B cell (primary cell): ENCODE measurements at regions of chr9 and their contacts with region 1.

Region 1: GRCh38 chr9:71768388-71769174 is at the start of gene CEMIP2:
- DNase-seq: peak; percentile 91
- ATAC-seq: peak; percentile 80
- H3K4me3 ChIP-seq: peak within 1 kb of the TSS; percentile 73 to 95 (median 94)
- H3K4me3 Mint-ChIP-seq: peak within 1 kb of the TSS; percentile 92
- H3K27ac ChIP-seq: peak within 1 kb of the TSS; percentile 87 to 89
- H3K27ac Mint-ChIP-seq: peak within 1 kb of the TSS; percentile 97
- H3K4me1 ChIP-seq: peaks cover 47 to 56% of the 10 kb centered on the region in 2 donors
- H3K4me1 Mint-ChIP-seq: peaks cover 52% of the 10 kb centered on the region
- H3K27me3 ChIP-seq: no peaks in the 10 kb centered on the region
- H3K27me3 Mint-ChIP-seq: no peaks in the 10 kb centered on the region
- CTCF ChIP-seq: no peak
- total RNA-seq, gene CEMIP2: 86.9 and 90.6 TPM in 2 replicates

Region 2: DNA sequence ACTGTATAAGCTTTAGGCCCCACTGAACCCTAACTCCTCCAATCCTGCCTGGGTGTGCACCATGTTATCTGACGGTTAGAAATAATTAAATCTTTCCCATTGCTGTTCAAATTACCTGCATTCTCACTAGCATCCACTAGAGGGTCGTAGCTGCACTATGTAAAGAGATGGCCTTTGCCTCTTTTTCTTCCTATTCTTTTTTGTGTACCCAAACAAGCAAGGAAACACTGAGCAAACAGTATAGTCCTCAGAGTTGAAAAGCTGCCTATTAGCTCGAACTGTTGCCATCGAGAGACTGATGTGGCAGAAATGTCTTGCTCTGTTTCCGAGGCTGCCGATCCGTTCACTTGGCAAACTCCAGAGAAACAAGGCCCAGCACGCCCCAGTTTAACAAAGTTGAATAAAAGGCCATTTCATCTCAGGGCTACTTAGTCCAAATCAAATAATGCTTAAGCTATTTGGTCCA is 483.4 kb before region 1 on chr9:
- CTCF ChIA-PET with region 1: no interaction called
- POLR2A ChIA-PET with region 1: no interaction called
- intact Hi-C with region 1: loop called (anchors 5 kb)
- DNase-seq: peak; percentile 54
- ATAC-seq: peak; percentile 61
- H3K4me3 ChIP-seq: no peak overlapping the region
- H3K4me3 Mint-ChIP-seq: no peak overlapping the region
- H3K27ac ChIP-seq: no peak overlapping the region
- H3K27ac Mint-ChIP-seq: no peak overlapping the region
- H3K4me1 ChIP-seq: no peaks in the 10 kb centered on the region
- H3K4me1 Mint-ChIP-seq: no peaks in the 10 kb centered on the region
- H3K27me3 ChIP-seq: no peaks in the 10 kb centered on the region
- H3K27me3 Mint-ChIP-seq: no peaks in the 10 kb centered on the region
- CTCF ChIP-seq: peak; percentile 93

Region 3: GRCh38 chr9:71487061-71487460 is 281.5 kb before region 1 on chr9:
- CTCF ChIA-PET with region 1: no interaction called
- POLR2A ChIA-PET with region 1: no interaction called
- intact Hi-C with region 1: no loop called
- DNase-seq: no peak
- ATAC-seq: no peak
- H3K4me3 ChIP-seq: no peak overlapping the region
- H3K4me3 Mint-ChIP-seq: no peak overlapping the region
- H3K27ac ChIP-seq: no peak overlapping the region
- H3K27ac Mint-ChIP-seq: no peak overlapping the region
- H3K4me1 ChIP-seq: no peaks in the 10 kb centered on the region
- H3K4me1 Mint-ChIP-seq: no peaks in the 10 kb centered on the region
- H3K27me3 ChIP-seq: peaks cover 0 to 13% (median 5%) of the 10 kb centered on the region in 4 experiments
- H3K27me3 Mint-ChIP-seq: peaks cover 33% of the 10 kb centered on the region
- CTCF ChIP-seq: no peak

Region 4: GRCh38 chr9:71716138-71716909 is 52.3 kb before region 1 on chr9:
- CTCF ChIA-PET with region 1: interaction called, 7 read pairs
- POLR2A ChIA-PET with region 1: no interaction called
- intact Hi-C with region 1: loop called (anchors 5 kb)
- DNase-seq: no peak
- ATAC-seq: no peak
- H3K4me3 ChIP-seq: no peak overlapping the region
- H3K4me3 Mint-ChIP-seq: no peak overlapping the region
- H3K27ac ChIP-seq: no peak overlapping the region
- H3K27ac Mint-ChIP-seq: no peak overlapping the region
- H3K4me1 ChIP-seq: no peaks in the 10 kb centered on the region
- H3K4me1 Mint-ChIP-seq: no peaks in the 10 kb centered on the region
- H3K27me3 ChIP-seq: no peaks in the 10 kb centered on the region
- H3K27me3 Mint-ChIP-seq: no peaks in the 10 kb centered on the region
- CTCF ChIP-seq: peak; percentile 82

Region 5: GRCh38 chr9:71748280-71748743 is 20.3 kb before region 1 on chr9:
- CTCF ChIA-PET with region 1: interaction called, 12 read pairs
- POLR2A ChIA-PET with region 1: no interaction called
- intact Hi-C with region 1: no loop called
- DNase-seq: no peak
- ATAC-seq: no peak
- H3K4me3 ChIP-seq: no peak overlapping the region
- H3K4me3 Mint-ChIP-seq: no peak overlapping the region
- H3K27ac ChIP-seq: no peak overlapping the region
- H3K27ac Mint-ChIP-seq: peak overlapping the region; percentile 5
- H3K4me1 ChIP-seq: peaks cover 10 to 14% of the 10 kb centered on the region in 2 donors
- H3K4me1 Mint-ChIP-seq: peaks cover 38% of the 10 kb centered on the region
- H3K27me3 ChIP-seq: no peaks in the 10 kb centered on the region
- H3K27me3 Mint-ChIP-seq: no peaks in the 10 kb centered on the region
- CTCF ChIP-seq: no peak

Region 6: DNA sequence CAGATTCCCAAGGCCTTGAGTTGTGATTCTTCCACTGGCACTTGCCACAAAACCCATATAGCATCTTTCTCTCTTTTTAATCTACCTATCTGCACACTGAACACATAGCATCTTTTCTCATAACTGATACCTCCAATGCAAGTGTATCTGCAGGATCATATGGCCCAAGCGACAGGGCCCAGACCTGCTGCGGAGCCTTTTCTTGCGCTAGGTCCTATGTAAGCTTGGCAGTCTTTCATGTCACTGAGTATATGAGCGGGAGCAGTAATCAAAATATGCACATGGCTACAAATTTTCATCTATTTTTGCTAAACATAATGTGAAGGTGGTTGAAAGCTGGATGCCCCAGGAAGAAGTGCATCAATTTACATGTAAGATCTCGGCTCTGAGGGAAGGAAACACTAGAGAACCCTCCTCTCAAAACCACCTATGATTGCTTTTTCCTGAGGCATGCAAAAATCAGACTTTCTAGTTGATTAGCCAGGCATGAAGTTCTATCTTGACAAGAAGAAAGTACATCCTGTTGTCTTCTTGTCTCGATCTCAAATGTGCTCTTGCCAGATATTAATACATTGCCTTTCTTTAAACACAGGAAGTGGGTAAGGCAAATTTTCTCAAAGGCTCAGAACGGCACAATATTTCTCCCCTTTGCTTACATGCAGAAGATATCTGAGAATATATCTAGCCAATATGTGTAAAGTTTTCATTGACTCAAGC is 26.7 kb after region 1 on chr9:
- CTCF ChIA-PET with region 1: interaction called, 7 read pairs
- POLR2A ChIA-PET with region 1: interaction called, 18 read pairs
- intact Hi-C with region 1: loop called (anchors 1 kb)
- DNase-seq: peak; percentile 87
- ATAC-seq: peak; percentile 87
- H3K4me3 ChIP-seq: peak overlapping the region in 1 of 5 experiments; percentile 40
- H3K4me3 Mint-ChIP-seq: peak overlapping the region; percentile 92
- H3K27ac ChIP-seq: peak overlapping the region; percentile 84 to 92
- H3K27ac Mint-ChIP-seq: peak overlapping the region; percentile 93
- H3K4me1 ChIP-seq: peaks cover 77 to 80% of the 10 kb centered on the region in 2 donors
- H3K4me1 Mint-ChIP-seq: peaks cover 70% of the 10 kb centered on the region
- H3K27me3 ChIP-seq: no peaks in the 10 kb centered on the region
- H3K27me3 Mint-ChIP-seq: no peaks in the 10 kb centered on the region
- CTCF ChIP-seq: no peak

Region 7: GRCh38 chr9:71819115-71819739 is 50.6 kb after region 1 on chr9:
- CTCF ChIA-PET with region 1: interaction called, 28 read pairs
- POLR2A ChIA-PET with region 1: interaction called, 3 read pairs
- intact Hi-C with region 1: loop called (anchors 1 kb)
- DNase-seq: peak; percentile 65
- ATAC-seq: no peak
- H3K4me3 ChIP-seq: no peak overlapping the region
- H3K4me3 Mint-ChIP-seq: no peak overlapping the region
- H3K27ac ChIP-seq: no peak overlapping the region
- H3K27ac Mint-ChIP-seq: no peak overlapping the region
- H3K4me1 ChIP-seq: peaks cover 21 to 24% of the 10 kb centered on the region in 2 donors
- H3K4me1 Mint-ChIP-seq: peaks cover 32% of the 10 kb centered on the region
- H3K27me3 ChIP-seq: no peaks in the 10 kb centered on the region
- H3K27me3 Mint-ChIP-seq: no peaks in the 10 kb centered on the region
- CTCF ChIP-seq: peak; percentile 88

Region 8: DNA sequence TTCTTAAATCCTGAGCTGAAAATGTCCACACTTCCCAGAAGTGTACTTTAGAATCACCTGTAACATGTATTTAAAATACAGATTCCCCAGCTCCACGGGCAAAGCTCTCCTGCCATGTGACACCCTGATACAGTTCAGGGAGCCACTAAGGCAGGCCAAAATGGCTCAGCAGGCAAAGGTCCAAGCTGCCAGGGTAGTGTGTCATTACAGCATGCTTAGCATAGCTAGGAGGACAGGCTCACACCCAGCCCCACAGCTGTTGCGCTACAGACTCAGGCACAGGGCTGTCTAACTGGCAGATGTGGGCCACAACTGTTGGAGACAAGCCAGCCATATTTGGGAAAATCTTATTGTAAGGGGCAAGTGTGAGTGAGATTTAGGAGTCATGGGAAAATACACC is 215.8 kb after region 1 on chr9:
- CTCF ChIA-PET with region 1: no interaction called
- POLR2A ChIA-PET with region 1: no interaction called
- intact Hi-C with region 1: no loop called
- DNase-seq: no peak
- ATAC-seq: no peak
- H3K4me3 ChIP-seq: no peak overlapping the region
- H3K4me3 Mint-ChIP-seq: no peak overlapping the region
- H3K27ac ChIP-seq: no peak overlapping the region
- H3K27ac Mint-ChIP-seq: no peak overlapping the region
- H3K4me1 ChIP-seq: no peaks in the 10 kb centered on the region
- H3K4me1 Mint-ChIP-seq: peaks cover 4% of the 10 kb centered on the region
- H3K27me3 ChIP-seq: no peaks in the 10 kb centered on the region
- H3K27me3 Mint-ChIP-seq: no peaks in the 10 kb centered on the region
- CTCF ChIP-seq: no peak

Region 9: DNA sequence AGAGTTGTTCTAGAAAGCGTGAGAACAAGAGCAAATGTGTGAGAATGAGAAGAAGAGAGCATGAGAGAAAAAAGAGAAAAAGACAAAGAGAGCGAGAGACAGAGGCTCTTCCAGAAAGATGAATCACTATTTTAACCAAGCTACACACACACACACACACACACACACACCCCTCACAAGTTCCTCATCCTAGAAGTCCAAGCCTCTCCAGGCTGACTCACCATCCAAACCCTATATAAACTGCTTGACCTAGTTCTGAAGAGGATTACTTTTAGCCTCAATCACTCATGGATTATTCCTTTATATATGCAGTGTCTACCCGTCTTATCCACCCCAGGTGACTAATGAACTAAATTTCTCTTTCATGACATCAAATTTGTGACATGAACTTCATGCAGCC is 254.3 kb after region 1 on chr9:
- CTCF ChIA-PET with region 1: interaction called, 13 read pairs
- POLR2A ChIA-PET with region 1: no interaction called
- intact Hi-C with region 1: no loop called
- DNase-seq: no peak
- ATAC-seq: no peak
- H3K4me3 ChIP-seq: no peak overlapping the region
- H3K4me3 Mint-ChIP-seq: no peak overlapping the region
- H3K27ac ChIP-seq: no peak overlapping the region
- H3K27ac Mint-ChIP-seq: no peak overlapping the region
- H3K4me1 ChIP-seq: peaks cover 0 to 4% of the 10 kb centered on the region in 2 donors
- H3K4me1 Mint-ChIP-seq: peaks cover 5% of the 10 kb centered on the region
- H3K27me3 ChIP-seq: peaks cover 0 to 1% (median 0%) of the 10 kb centered on the region in 4 experiments
- H3K27me3 Mint-ChIP-seq: peaks cover 7% of the 10 kb centered on the region
- CTCF ChIP-seq: no peak